ENCODE measurements at regions of chr1 and their contacts with region 1.

Region 1: GRCh38 chr1:208264469-208265121 is 20.4 kb upstream of the PLXNA2 start:
- DNase-seq: no peak
- ATAC-seq: no peak
- H3K4me3 ChIP-seq: no peak overlapping the region
- H3K27ac ChIP-seq: no peak overlapping the region
- H3K4me1 ChIP-seq: no peaks in the 10 kb centered on the region
- CTCF ChIP-seq: no peak
- EP300 ChIP-seq: no peak
- POLR2A ChIP-seq: no peak
- RAD21 ChIP-seq: no peak

Region 2: DNA sequence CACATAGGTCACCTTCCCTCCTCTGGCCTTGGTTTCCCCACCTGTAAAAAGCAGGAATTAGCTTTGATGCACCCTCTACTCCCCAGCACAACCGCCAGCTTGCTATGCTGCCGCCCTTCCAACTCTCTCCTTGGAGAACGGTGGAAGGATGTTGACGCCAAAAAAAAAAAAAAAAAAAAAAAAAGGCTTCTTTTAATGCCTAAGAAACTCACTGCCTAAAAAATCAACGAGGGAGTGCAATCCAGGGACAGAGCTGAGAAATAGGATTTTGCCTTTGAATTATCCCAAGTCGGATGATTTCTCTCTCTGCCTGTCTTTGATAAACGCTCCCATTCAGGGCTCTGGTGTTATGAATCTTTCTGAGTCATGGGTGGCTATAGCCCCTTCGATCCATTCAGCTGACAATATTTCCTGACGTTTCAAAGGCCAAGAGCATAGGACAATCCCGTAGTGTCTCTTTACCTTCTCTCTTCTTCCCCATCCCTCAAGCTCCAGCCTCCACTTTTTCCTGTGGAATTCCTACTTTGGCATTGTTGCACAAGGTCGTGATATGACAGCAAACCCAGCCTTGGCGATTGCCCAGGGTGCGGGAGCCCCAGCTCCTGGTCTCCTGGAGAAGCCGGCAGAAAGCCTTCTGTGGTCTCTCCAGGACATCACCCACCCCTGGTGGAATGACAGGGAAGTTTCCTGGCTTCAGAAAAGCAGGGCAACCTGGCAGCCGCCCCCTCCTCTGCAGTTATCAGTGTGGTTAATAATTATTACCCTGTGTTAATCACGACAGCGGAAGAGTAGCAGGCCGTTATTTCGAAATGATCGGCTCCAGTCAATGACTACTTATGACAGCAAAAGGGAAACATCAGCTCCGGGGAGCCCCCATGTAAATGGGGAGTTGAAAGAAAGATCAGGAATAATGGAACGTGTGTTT is 12.4 kb before region 1 on chr1:
- CTCF ChIA-PET with region 1: interaction called, 10 read pairs
- POLR2A ChIA-PET with region 1: no interaction called
- DNase-seq: peak; percentile 50 to 85
- ATAC-seq: peak; percentile 83 to 93
- H3K4me3 ChIP-seq: no peak overlapping the region
- H3K27ac ChIP-seq: no peak overlapping the region
- H3K4me1 ChIP-seq: peaks cover 4% of the 10 kb centered on the region; the same call in 1 of the 3 replicates
- CTCF ChIP-seq: peak; percentile 62
- EP300 ChIP-seq: no peak
- POLR2A ChIP-seq: no peak
- RAD21 ChIP-seq: peak; percentile 71 to 75